Activated CD8-positive, alpha-beta T cell treated with anti-CD3 and anti-CD28 coated beads, Interleukin-2, amount 10 ng/mL, durations not matched to agents 7 days and 5 days (primary cell): ENCODE measurements at regions of chr5 and their contacts with region 1.

Region 1: DNA sequence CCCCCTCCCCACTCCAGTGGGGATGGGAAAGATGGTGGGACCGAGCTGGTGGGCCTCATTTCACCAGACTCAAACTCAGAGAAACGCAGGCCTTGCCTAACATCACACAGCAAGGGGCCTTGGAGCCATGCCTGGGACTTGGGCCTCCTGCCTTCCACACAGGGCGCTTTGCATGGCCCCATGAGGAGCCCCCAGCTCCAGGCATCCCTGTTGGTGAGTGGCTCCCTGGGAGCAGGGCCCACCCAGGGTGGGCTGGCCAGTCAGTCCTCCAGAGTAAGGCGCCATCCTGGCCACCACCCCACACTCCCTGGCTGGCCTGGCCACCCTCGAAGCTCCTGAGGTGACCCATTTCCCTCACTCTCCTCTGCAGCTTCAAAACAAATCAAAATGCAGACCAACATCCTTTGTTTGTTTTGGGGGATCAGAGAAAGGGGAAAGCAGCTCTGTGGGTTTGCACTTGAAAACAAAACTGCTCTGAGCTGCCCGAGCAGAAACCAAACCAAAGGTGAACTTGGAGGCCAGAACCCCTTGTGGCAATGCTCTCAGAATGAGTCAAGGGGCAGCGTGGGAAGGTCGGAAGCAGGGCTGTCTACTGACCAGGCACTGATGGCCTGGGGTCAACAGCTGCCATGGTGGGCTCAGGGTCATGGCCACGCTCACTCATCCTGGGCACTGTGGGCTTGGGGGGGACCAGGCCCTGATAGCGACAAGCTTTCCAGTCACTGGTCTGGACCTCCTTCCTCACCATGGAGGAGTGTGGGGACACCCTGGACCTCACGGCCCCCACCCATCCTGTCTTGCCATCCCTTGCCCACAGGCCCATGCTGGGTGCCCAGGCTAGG is 37.0 kb upstream of the VDAC1 start:
- DNase-seq: peak; percentile 43
- ATAC-seq: peak; percentile 24
- H3K4me3 Mint-ChIP-seq: no peak overlapping the region
- H3K27ac Mint-ChIP-seq: peak overlapping the region; percentile 39
- H3K4me1 Mint-ChIP-seq: peaks cover 42% of the 10 kb centered on the region
- H3K27me3 Mint-ChIP-seq: no peaks in the 10 kb centered on the region

Region 2: DNA sequence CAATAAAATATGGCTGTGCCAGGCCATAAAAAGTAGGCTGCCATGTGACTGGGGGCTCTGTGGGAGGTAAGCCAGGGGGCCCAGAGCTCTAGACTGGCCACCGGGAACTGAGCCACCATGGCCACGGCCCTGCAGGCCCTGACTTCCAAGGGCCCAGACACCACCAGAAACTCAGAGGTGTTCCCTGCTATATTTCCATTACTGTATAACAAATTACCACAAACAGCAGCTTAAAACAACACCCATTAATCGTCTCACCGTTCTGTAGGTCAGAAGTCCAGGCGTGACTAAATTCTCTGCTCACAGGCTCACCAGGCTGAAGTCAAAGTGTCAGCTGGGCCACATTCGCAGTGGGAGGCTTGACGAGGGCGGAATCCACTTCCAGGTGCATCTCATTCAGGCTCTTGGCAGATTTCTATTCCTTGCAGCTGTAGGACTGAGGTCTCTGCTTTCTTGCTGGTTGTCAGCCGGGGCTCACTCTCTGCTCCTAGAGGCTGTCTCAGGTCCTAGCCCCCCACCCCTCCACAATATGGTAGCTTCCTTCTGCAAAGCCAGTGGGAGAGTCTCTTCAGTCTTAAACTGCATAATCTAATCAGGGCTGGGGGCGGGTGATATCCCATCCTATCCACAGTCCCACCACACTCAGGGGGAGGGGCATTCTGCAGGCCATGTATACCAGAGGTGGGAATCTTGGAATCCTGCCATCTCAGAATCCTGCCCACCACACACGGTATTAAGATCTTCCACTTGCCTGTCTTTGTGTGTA is 198.8 kb before region 1 on chr5:
- CTCF ChIA-PET with region 1: no interaction called
- POLR2A ChIA-PET with region 1: no interaction called
- DNase-seq: no peak
- ATAC-seq: no peak
- H3K4me3 Mint-ChIP-seq: no peak overlapping the region
- H3K27ac Mint-ChIP-seq: no peak overlapping the region
- H3K4me1 Mint-ChIP-seq: peaks cover 14% of the 10 kb centered on the region
- H3K27me3 Mint-ChIP-seq: peaks cover 8% of the 10 kb centered on the region

Region 3: DNA sequence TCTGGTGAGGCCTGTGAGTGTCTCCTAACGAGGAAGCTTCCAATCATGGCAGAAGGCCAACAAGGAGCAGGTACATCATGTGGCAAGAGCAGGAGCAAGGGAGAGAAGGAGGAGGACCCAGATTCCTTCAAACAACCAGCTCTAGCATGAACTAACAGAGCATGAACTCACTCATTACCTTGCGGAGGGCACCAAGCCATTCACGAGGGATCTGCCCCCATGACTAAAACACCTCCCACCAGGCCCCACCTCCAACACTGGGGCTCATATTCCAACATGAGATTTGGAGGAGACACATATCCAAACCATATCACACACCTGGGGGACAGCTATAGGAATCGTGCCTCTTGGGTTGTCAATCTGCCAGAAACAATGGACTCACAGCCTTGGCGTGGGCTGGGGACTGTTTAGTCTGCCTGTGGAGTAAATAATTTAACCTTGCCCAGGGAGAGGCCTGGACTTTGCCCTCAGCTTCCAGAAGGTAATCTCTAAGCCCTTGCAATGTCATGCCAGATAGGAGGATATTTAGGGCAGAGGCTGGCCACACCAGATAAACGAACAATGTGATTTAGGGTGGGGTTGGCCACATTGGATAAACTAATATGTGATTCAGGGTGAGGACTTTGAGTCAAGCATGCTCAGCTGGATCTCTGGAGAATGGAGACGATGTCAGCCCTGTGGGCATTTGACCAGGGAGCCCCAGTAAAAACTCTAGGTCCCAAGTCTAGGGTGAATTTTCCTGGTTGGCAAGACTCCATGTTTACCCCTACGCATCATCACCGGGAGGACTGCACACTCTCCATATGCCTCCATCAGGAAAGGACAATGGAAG is 23.4 kb before region 1 on chr5:
- CTCF ChIA-PET with region 1: interaction called, 10 read pairs
- POLR2A ChIA-PET with region 1: no interaction called
- DNase-seq: no peak
- ATAC-seq: no peak
- H3K4me3 Mint-ChIP-seq: no peak overlapping the region
- H3K27ac Mint-ChIP-seq: no peak overlapping the region
- H3K4me1 Mint-ChIP-seq: no peaks in the 10 kb centered on the region
- H3K27me3 Mint-ChIP-seq: peaks cover 4% of the 10 kb centered on the region

Region 4: GRCh38 chr5:134059758-134060495 is 18.1 kb after region 1 on chr5:
- CTCF ChIA-PET with region 1: interaction called, 77 read pairs
- POLR2A ChIA-PET with region 1: interaction called, 4 read pairs
- DNase-seq: no peak
- ATAC-seq: no peak
- H3K4me3 Mint-ChIP-seq: no peak overlapping the region
- H3K27ac Mint-ChIP-seq: no peak overlapping the region
- H3K4me1 Mint-ChIP-seq: peaks cover 5% of the 10 kb centered on the region
- H3K27me3 Mint-ChIP-seq: peaks cover 2% of the 10 kb centered on the region

Region 5: DNA sequence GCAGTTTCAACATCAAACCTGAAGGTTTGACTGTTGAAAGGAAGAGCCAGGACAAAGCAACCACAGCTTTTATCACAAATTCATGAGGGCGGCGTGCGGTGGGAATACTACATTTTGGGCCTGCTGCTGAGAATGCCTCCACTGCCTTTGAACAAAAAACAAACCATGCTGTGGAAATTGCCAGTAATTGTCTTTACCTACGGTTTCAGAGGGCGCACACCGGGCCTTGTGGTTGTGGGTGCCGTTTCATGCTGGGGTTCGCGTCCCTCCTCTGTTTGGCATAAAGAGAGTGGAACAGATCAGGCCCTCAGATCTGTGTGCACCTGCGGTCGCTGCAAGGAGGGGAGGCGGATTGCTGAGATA is 45.1 kb after region 1 on chr5:
- CTCF ChIA-PET with region 1: interaction called, 71 read pairs
- POLR2A ChIA-PET with region 1: interaction called, 4 read pairs
- DNase-seq: peak; percentile 87
- ATAC-seq: peak; percentile 85
- H3K4me3 Mint-ChIP-seq: peak overlapping the region; percentile 49
- H3K27ac Mint-ChIP-seq: peak overlapping the region; percentile 80
- H3K4me1 Mint-ChIP-seq: peaks cover 77% of the 10 kb centered on the region
- H3K27me3 Mint-ChIP-seq: peaks cover 2% of the 10 kb centered on the region

Region 6: DNA sequence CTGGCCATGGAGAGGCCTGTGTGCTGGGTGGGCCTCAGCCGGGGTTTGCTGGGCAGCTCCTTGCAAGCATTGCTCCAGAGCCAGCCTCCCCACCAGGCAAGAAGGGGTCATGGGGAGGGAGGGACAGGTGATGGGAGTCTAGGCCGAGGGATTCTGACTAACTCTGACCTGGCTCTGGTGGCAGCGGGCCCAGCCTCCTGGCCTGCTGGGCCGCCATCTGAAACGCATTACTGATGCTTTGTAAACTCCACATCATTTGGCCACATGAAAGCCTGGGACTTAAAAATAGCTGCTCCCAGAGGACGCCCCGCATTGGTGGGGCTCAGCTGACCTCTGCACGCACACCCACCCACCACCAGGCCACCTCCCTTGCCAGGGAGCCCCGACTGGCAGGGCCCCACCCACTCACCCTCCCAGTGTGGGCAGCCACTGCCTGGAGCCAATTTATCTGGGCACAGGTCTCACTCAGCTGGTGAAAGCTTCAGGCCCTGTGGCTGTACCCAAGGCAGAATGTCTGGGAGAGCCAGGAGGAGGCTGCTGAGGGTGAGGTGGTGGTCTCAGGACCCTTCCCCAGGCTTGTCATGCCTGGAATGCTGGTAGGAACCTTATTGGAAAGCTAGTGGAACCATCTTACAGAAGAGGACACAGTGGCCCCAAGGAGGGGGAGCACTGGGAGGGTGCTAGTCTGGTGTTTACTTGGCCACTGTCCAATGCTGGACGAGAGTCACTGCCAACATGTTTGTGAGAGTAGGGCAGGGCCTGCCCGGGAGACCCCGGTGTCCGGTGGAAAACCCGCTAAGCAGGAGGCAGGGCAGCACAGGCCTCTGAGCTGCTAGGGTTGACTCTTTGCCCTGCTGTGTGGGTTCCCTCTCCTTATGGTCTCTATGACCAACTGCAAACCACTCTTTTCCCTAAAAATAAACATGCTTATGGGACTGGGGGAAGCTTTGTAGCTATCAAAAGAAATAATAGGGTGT is 83.5 kb after region 1 on chr5:
- CTCF ChIA-PET with region 1: interaction called, 76 read pairs
- POLR2A ChIA-PET with region 1: interaction called, 14 read pairs
- DNase-seq: no peak
- ATAC-seq: no peak
- H3K4me3 Mint-ChIP-seq: peak overlapping the region; percentile 12
- H3K27ac Mint-ChIP-seq: peak overlapping the region; percentile 61
- H3K4me1 Mint-ChIP-seq: peaks cover 98% of the 10 kb centered on the region
- H3K27me3 Mint-ChIP-seq: no peaks in the 10 kb centered on the region

Region 7: DNA sequence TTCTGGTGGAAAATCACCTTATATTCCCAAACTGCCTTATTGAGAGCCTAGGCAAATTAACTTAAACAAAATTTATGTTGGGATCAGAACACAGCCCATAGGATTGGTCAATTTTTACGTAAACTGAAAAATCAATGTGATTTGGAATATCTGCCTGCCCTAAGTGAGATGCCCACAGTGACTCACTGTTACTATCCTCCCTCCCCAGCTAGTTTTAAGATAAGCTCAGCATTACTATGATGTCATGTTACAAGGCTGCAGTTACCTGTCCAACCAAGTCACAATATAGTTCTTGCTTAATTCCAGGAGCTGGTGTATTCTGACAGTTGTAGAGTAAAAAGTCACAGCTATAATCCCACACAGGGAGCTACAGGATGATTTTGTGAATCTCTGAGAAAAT is 111.9 kb after region 1 on chr5:
- CTCF ChIA-PET with region 1: interaction called, 618 read pairs
- POLR2A ChIA-PET with region 1: interaction called, 3 read pairs
- DNase-seq: no peak
- ATAC-seq: no peak
- H3K4me3 Mint-ChIP-seq: no peak overlapping the region
- H3K27ac Mint-ChIP-seq: no peak overlapping the region
- H3K4me1 Mint-ChIP-seq: peaks cover 28% of the 10 kb centered on the region
- H3K27me3 Mint-ChIP-seq: no peaks in the 10 kb centered on the region

Region 8: GRCh38 chr5:134184155-134185135 is 142.7 kb after region 1 on chr5:
- CTCF ChIA-PET with region 1: interaction called, 16 read pairs
- POLR2A ChIA-PET with region 1: no interaction called
- DNase-seq: peak; percentile 82
- ATAC-seq: peak; percentile 93
- H3K4me3 Mint-ChIP-seq: no peak overlapping the region
- H3K27ac Mint-ChIP-seq: no peak overlapping the region
- H3K4me1 Mint-ChIP-seq: no peaks in the 10 kb centered on the region
- H3K27me3 Mint-ChIP-seq: no peaks in the 10 kb centered on the region

Region 9: GRCh38 chr5:134394932-134395331 is 353.1 kb after region 1 on chr5:
- CTCF ChIA-PET with region 1: no interaction called
- POLR2A ChIA-PET with region 1: no interaction called
- DNase-seq: no peak
- ATAC-seq: no peak
- H3K4me3 Mint-ChIP-seq: no peak overlapping the region
- H3K27ac Mint-ChIP-seq: no peak overlapping the region
- H3K4me1 Mint-ChIP-seq: no peaks in the 10 kb centered on the region
- H3K27me3 Mint-ChIP-seq: no peaks in the 10 kb centered on the region